Activated CD4-positive, alpha-beta T cell treated with anti-CD3 and anti-CD28 coated beads, Interleukin-2, amount 10 ng/mL, durations not matched to agents 7 days and 5 days (primary cell): ENCODE measurements at regions of chr7 and their contacts with region 1.

Region 1: GRCh38 chr7:105006437-105007133 is 7.4 kb upstream of the KMT2E start:
- DNase-seq: no peak
- H3K4me3 Mint-ChIP-seq: no peak overlapping the region
- H3K27ac Mint-ChIP-seq: peak overlapping the region; percentile 1
- H3K4me1 Mint-ChIP-seq: peaks cover 71% of the 10 kb centered on the region
- H3K27me3 Mint-ChIP-seq: no peaks in the 10 kb centered on the region

Region 2: DNA sequence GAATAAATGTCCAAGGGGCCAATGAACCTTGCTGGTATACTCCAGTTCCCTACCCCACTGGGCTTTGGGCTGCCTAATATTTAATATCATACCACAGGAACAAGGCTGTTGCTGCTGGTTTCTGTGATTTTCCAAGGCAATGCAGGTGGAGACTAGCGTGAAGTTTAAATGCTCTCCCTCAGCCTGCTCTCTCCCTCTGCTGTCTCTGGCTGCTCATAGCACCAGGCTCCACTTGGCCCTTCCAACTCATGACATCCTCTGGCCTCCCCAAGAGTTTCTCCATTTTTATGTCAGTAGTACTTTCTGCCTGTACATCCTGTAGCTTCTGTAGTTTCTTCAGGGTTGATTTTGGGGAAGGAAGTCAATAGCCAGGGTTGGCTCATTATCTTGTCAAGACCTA is 574.7 kb before region 1 on chr7:
- CTCF ChIA-PET with region 1: no interaction called
- POLR2A ChIA-PET with region 1: no interaction called
- DNase-seq: no peak
- H3K4me3 Mint-ChIP-seq: no peak overlapping the region
- H3K27ac Mint-ChIP-seq: no peak overlapping the region
- H3K4me1 Mint-ChIP-seq: no peaks in the 10 kb centered on the region
- H3K27me3 Mint-ChIP-seq: no peaks in the 10 kb centered on the region

Region 3: GRCh38 chr7:104990976-104991375 is 15.6 kb before region 1 on chr7:
- CTCF ChIA-PET with region 1: interaction called, 11 read pairs
- POLR2A ChIA-PET with region 1: no interaction called
- DNase-seq: no peak
- H3K4me3 Mint-ChIP-seq: no peak overlapping the region
- H3K27ac Mint-ChIP-seq: no peak overlapping the region
- H3K4me1 Mint-ChIP-seq: peaks cover 45% of the 10 kb centered on the region
- H3K27me3 Mint-ChIP-seq: no peaks in the 10 kb centered on the region

Region 4: GRCh38 chr7:105028004-105028403 is 21.4 kb after region 1 on chr7:
- CTCF ChIA-PET with region 1: no interaction called
- POLR2A ChIA-PET with region 1: no interaction called
- DNase-seq: no peak
- H3K4me3 Mint-ChIP-seq: no peak overlapping the region
- H3K27ac Mint-ChIP-seq: no peak overlapping the region
- H3K4me1 Mint-ChIP-seq: peaks cover 66% of the 10 kb centered on the region
- H3K27me3 Mint-ChIP-seq: no peaks in the 10 kb centered on the region